Activated B cell treated with CpG ODN at 0.5 μM for 24 hours (primary cell): ENCODE measurements at regions of chr19 and their contacts with region 1.

Region 1: GRCh38 chr19:54189735-54190502 is 539 bp upstream of the MBOAT7 start:
- DNase-seq: peak; percentile 99
- ATAC-seq: peak; percentile 57
- H3K4me3 Mint-ChIP-seq: peak overlapping the region; percentile 90
- H3K27ac Mint-ChIP-seq: peak overlapping the region; percentile 98
- H3K4me1 Mint-ChIP-seq: peaks cover 35% of the 10 kb centered on the region
- H3K27me3 Mint-ChIP-seq: no peaks in the 10 kb centered on the region
- CTCF ChIP-seq: no peak

Region 2: DNA sequence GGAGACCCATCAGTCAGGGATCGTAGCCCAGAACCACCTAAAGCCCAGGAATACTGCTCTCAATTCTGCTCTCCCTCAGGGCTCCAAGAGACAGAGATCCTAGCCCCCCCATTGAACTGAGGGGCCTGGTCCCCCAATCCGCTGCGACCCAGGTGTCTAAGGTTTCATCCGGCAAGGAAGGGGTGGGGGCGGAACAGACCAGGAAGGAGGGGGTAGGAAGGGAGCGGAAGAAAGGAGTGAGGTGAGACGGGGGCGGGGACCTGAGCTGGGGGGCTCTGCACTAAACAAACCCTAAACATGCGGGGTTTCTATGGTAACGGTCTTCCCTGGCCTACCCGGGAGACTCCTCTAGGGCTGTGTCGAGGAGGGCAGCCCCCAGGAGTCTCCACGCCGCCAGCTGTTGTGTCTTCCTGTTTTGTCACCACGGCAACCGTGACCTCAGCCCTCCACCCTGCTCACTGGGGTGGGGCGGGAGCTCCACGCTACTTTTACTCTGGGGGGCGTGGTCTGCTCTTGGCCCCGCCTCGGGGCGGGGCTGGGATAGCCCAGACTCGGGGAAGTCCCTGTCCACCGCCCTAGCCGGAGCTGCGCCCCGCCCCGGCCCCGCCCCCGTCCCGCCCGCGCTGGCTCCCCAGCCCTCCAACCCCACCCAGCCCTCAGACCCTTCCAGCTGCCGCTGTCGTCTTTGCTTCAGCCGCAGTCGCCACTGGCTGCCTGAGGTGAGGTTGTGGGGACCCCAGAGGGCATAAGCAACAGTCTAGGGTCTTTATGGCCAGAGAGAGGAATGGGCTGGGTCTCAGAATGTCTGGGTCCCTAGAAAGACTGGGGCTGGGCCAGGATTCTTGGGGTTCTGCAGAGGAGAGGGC is 322.5 kb before region 1 on chr19 and contains the start of gene MYADM:
- CTCF ChIA-PET with region 1: no interaction called
- POLR2A ChIA-PET with region 1: interaction called, 5 read pairs
- intact Hi-C with region 1: loop called (anchors 1 kb)
- DNase-seq: peak; percentile 99
- ATAC-seq: peak; percentile 65
- H3K4me3 Mint-ChIP-seq: peak within 1 kb of the TSS; percentile 91
- H3K27ac Mint-ChIP-seq: peak within 1 kb of the TSS; percentile 93
- H3K4me1 Mint-ChIP-seq: peaks cover 44% of the 10 kb centered on the region
- H3K27me3 Mint-ChIP-seq: no peaks in the 10 kb centered on the region
- CTCF ChIP-seq: no peak
- total RNA-seq, gene MYADM: 10.9 and 12.9 TPM in 2 replicates

Region 3: GRCh38 chr19:54062643-54063042 is 127.3 kb before region 1 on chr19:
- CTCF ChIA-PET with region 1: no interaction called
- POLR2A ChIA-PET with region 1: no interaction called
- intact Hi-C with region 1: no loop called
- DNase-seq: no peak
- ATAC-seq: no peak
- H3K4me3 Mint-ChIP-seq: no peak overlapping the region
- H3K27ac Mint-ChIP-seq: no peak overlapping the region
- H3K4me1 Mint-ChIP-seq: no peaks in the 10 kb centered on the region
- H3K27me3 Mint-ChIP-seq: peaks cover 10% of the 10 kb centered on the region
- CTCF ChIP-seq: no peak

Region 4: DNA sequence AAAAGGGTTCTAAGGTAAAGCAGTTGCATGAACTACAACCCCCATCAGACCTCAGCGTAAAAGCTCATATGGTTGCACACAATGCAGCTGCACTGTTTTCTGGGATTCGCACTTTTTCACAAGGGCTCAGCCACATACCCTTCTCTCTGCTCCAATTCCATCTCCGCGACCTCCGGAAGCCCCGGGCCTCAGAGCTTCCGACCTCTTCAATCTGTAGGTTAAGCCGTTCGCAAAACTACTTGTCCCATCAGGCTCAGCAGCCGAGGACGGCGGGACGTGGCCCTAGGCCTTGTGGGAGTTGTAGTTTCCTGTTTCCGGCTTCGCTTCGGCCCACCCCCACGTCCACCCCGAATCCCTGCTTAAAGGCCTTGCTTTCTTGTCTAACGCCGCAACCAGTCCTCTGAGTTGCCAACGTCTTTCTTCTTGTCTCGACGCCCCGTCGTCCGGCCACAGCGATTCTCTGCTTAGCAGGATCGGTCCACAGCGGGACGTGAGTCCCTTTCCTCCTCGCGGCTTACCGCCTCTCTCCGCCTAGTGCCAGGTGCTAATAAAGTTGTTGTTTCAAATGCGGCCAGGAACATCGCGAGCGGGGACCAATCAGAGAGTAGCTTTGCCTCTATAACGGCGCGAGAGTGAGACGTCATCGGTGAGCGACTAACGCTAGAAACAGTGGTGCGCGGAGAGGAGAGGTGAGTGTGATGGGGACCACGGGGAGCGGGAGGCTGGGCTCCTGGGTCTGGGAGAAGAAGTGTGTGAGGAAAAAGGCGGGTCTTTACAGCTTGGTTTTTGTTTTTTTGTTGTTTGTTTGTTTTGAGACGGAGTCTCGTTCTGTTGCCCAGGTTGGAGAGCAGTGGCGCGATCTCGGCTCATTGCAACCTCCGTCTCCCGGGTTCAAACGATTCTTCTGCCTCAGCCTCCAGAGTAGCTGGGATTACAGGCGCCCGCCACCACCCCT is 74.5 kb before region 1 on chr19 and contains the starts of genes PRPF31 and TFPT:
- CTCF ChIA-PET with region 1: no interaction called
- POLR2A ChIA-PET with region 1: interaction called, 24 read pairs
- intact Hi-C with region 1: loop called (anchors 1 kb)
- DNase-seq: peak; percentile 90
- ATAC-seq: peak; percentile 93
- H3K4me3 Mint-ChIP-seq: peak within 1 kb of the TSS; percentile 94
- H3K27ac Mint-ChIP-seq: peak within 1 kb of the TSS; percentile 98
- H3K4me1 Mint-ChIP-seq: peaks cover 36% of the 10 kb centered on the region
- H3K27me3 Mint-ChIP-seq: no peaks in the 10 kb centered on the region
- CTCF ChIP-seq: no peak
- total RNA-seq, gene PRPF31: 78.9 and 79.3 TPM in 2 replicates
- total RNA-seq, gene TFPT: 16.6 and 17.9 TPM in 2 replicates

Region 5: DNA sequence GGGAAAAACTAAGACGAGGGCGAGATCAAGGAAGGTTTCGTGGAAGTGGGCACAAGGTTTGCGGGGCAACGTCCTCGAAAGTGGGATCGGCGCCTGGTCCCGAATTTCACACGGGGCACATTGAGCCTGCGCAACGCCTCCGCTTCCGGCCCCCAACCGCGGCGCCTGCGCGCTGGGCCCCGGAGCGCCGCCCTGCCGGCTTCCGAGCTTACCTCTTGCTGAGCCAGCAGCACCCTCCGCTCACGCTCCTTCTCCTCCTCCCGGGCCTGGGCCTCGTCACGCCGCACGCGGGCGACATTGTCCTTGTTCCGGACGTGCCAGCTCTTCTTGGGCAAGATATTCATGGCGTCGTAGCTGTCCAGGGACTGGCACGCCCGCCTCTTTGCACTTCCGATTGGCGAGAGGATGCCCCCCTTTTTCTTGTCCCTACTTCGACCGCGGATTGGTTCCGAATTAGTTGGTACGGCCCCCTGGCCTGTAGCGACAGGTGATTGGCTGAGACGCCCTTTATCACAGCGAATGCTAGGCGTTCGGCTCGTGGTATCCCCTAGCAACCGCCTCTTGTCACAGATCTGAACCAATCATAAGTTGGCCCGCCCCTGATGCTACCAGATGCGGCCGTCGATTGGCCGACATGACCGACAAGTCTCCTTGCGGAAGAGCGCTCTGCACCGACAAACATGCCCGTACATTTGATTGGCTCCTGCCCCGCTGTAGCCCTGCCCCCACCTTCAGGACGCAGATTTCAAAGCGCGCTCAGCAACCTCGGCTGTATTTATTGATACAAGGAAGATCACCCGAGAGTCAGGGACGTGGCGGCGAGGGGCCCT is 30.4 kb before region 1 on chr19 and contains the start of gene LENG1:
- CTCF ChIA-PET with region 1: no interaction called
- POLR2A ChIA-PET with region 1: interaction called, 55 read pairs
- intact Hi-C with region 1: loop called (anchors 1 kb)
- DNase-seq: peak; percentile 84
- ATAC-seq: peak; percentile 85
- H3K4me3 Mint-ChIP-seq: peak within 1 kb of the TSS; percentile 100
- H3K27ac Mint-ChIP-seq: peak within 1 kb of the TSS; percentile 99
- H3K4me1 Mint-ChIP-seq: peaks cover 51% of the 10 kb centered on the region
- H3K27me3 Mint-ChIP-seq: peaks cover 8% of the 10 kb centered on the region
- CTCF ChIP-seq: no peak
- total RNA-seq, gene LENG1: 8.3 and 8.4 TPM in 2 replicates

Region 6: GRCh38 chr19:54203151-54203611 is 13.3 kb after region 1 on chr19:
- CTCF ChIA-PET with region 1: interaction called, 3 read pairs
- POLR2A ChIA-PET with region 1: interaction called, 244 read pairs
- intact Hi-C with region 1: loop called (anchors 1 kb)
- DNase-seq: no peak
- ATAC-seq: no peak
- H3K4me3 Mint-ChIP-seq: peak overlapping the region; percentile 100
- H3K27ac Mint-ChIP-seq: peak overlapping the region; percentile 24
- H3K4me1 Mint-ChIP-seq: peaks cover 82% of the 10 kb centered on the region
- H3K27me3 Mint-ChIP-seq: no peaks in the 10 kb centered on the region
- CTCF ChIP-seq: no peak

Region 7: DNA sequence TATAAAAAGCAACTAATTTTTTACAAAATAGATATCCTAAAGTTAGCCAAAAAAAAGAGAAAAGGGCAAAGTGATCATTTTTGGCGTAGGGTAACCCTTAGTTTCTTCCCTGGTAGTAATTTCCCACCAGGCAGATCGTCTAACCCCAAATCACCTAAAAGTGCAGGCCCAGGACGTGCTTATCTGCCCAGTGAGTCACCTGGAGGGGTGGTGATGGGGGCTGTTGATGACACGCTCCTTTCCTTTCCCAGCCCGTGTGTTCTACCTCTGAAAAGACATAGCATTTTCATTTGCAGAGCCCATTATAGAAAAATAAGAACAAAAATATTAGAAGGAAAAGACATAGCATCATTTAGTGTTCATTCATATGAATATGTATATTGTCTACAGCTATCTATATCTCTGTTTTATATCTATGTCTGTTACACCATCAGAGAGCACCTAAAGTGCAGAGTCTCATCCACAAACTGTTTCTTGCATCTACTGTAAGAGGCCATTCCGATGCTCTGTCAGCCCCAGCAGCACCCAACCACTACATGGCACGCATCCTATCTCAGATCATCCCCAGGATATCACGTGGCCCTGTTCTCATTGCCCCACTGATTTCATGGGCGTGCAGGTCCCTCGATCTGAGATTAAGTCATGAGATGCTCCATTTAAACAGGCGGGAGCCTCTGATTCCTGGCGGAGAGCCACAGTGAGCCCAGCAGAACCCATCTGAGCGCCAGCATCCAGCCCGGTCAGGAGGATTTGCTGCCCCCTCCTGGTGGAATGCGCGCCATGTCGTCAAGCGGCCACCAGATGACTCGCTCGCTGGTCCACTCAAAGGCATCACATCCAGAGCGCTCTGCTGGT is 41.4 kb after region 1 on chr19:
- CTCF ChIA-PET with region 1: no interaction called
- POLR2A ChIA-PET with region 1: no interaction called
- intact Hi-C with region 1: loop called (anchors 1 kb)
- DNase-seq: peak; percentile 73
- ATAC-seq: peak; percentile 96
- H3K4me3 Mint-ChIP-seq: no peak overlapping the region
- H3K27ac Mint-ChIP-seq: no peak overlapping the region
- H3K4me1 Mint-ChIP-seq: peaks cover 6% of the 10 kb centered on the region
- H3K27me3 Mint-ChIP-seq: peaks cover 44% of the 10 kb centered on the region
- CTCF ChIP-seq: no peak

Region 8: DNA sequence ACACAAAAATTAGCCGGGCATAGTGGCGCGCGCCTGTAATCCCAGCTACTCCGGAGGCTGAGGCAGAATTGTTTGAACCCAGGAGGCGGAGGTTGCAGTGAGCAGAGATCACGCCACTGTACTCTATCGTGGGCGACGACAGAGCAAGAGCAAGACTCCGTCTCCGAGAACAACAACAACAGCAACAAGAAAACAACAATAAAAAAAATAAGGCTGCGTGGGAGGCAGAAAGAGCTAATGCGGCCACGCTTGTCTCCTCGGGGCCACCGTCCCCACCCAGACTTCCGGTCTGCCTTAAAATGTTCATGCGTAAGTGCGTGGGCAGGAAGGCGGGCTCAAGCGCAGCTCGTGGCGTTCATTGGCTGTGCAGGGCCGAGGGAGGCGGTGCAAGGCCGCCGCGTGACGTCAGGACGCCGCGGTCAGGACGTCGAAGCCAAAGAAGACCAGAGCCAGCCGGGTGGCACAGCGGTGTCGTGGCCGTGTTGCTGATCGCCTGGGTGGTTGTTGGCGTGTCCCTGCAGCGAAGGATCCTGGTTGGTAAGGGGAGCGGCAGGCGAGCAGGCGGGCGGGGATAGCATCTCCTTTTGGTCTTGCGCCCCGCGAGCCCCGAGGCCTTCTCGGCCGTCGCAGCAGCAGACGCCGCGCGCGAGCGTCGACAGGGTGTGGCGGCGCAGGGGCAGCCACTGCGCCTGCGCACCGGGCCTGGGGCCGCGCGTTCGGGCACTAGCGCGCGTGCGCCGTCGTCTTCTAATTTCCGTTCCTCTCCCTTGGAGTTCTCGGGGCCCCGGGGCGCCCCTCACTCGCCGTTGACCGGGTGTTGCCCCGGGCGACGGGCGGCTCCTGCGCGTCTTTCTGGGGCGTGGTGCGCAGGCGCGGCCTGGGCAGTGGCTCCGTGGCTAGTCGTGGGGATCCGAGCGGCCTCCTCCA is 259.1 kb after region 1 on chr19 and contains the start of gene LENG8:
- CTCF ChIA-PET with region 1: no interaction called
- POLR2A ChIA-PET with region 1: interaction called, 17 read pairs
- intact Hi-C with region 1: no loop called
- DNase-seq: peak; percentile 98
- ATAC-seq: peak; percentile 92
- H3K4me3 Mint-ChIP-seq: peak within 1 kb of the TSS; percentile 100
- H3K27ac Mint-ChIP-seq: peak within 1 kb of the TSS; percentile 97
- H3K4me1 Mint-ChIP-seq: peaks cover 49% of the 10 kb centered on the region
- H3K27me3 Mint-ChIP-seq: no peaks in the 10 kb centered on the region
- CTCF ChIP-seq: no peak
- total RNA-seq, gene LENG8: 296 and 363 TPM in 2 replicates

Region 9: GRCh38 chr19:54905803-54906511 is 716.0 kb after region 1 on chr19 and contains the start of gene NCR1:
- CTCF ChIA-PET with region 1: no interaction called
- POLR2A ChIA-PET with region 1: no interaction called
- intact Hi-C with region 1: no loop called
- DNase-seq: no peak
- ATAC-seq: no peak
- H3K4me3 Mint-ChIP-seq: no peak within 1 kb of the TSS
- H3K27ac Mint-ChIP-seq: no peak within 1 kb of the TSS
- H3K4me1 Mint-ChIP-seq: no peaks in the 10 kb centered on the region
- H3K27me3 Mint-ChIP-seq: peaks cover 13% of the 10 kb centered on the region
- CTCF ChIP-seq: no peak
- total RNA-seq, gene NCR1: not detected in 2 replicates